Naive thymus-derived CD4-positive, alpha-beta T cell (primary cell): ENCODE measurements at regions of chr6 and their contacts with region 1.

Region 1: GRCh38 chr6:32971581-32972352 is 3.4 kb downstream of the BRD2 start:
- DNase-seq: peak; percentile 99 to 100 (median 100)
- ATAC-seq: peak; percentile 73
- H3K4me3 ChIP-seq: peak overlapping the region; percentile 98
- H3K4me3 Mint-ChIP-seq: peak overlapping the region; percentile 89 to 100 (median 98)
- H3K27ac ChIP-seq: peak overlapping the region; percentile 94
- H3K27ac Mint-ChIP-seq: peak overlapping the region; percentile 78 to 100 (median 99)
- H3K4me1 ChIP-seq: peaks cover 26 to 32% of the 10 kb centered on the region in 2 donors
- H3K4me1 Mint-ChIP-seq: peaks cover 31 to 47% (median 40%) of the 10 kb centered on the region in 7 donors
- H3K27me3 ChIP-seq: no peaks in the 10 kb centered on the region
- H3K27me3 Mint-ChIP-seq: peaks cover 0 to 5% (median 0%) of the 10 kb centered on the region in 5 donors

Region 2: GRCh38 chr6:31739639-31740396 is 1231.9 kb before region 1 on chr6 and contains the start of gene MSH5:
- CTCF ChIA-PET with region 1: no interaction called
- POLR2A ChIA-PET with region 1: no interaction called
- intact Hi-C with region 1: loop called (anchors 5 kb)
- DNase-seq: peak; percentile 82 to 97 (median 92)
- ATAC-seq: peak; percentile 93
- H3K4me3 ChIP-seq: peak within 1 kb of the TSS; percentile 68
- H3K4me3 Mint-ChIP-seq: peak within 1 kb of the TSS; percentile 86 to 100 (median 98)
- H3K27ac ChIP-seq: peak within 1 kb of the TSS; percentile 69
- H3K27ac Mint-ChIP-seq: peak within 1 kb of the TSS; percentile 83 to 94 (median 90)
- H3K4me1 ChIP-seq: peaks cover 32 to 33% of the 10 kb centered on the region in 2 donors
- H3K4me1 Mint-ChIP-seq: peaks cover 41 to 69% (median 61%) of the 10 kb centered on the region in 7 donors
- H3K27me3 ChIP-seq: no peaks in the 10 kb centered on the region
- H3K27me3 Mint-ChIP-seq: no peaks in the 10 kb centered on the region
- total RNA-seq, gene MSH5: 10.3 to 52.2 (median 11.4) TPM

Region 3: DNA sequence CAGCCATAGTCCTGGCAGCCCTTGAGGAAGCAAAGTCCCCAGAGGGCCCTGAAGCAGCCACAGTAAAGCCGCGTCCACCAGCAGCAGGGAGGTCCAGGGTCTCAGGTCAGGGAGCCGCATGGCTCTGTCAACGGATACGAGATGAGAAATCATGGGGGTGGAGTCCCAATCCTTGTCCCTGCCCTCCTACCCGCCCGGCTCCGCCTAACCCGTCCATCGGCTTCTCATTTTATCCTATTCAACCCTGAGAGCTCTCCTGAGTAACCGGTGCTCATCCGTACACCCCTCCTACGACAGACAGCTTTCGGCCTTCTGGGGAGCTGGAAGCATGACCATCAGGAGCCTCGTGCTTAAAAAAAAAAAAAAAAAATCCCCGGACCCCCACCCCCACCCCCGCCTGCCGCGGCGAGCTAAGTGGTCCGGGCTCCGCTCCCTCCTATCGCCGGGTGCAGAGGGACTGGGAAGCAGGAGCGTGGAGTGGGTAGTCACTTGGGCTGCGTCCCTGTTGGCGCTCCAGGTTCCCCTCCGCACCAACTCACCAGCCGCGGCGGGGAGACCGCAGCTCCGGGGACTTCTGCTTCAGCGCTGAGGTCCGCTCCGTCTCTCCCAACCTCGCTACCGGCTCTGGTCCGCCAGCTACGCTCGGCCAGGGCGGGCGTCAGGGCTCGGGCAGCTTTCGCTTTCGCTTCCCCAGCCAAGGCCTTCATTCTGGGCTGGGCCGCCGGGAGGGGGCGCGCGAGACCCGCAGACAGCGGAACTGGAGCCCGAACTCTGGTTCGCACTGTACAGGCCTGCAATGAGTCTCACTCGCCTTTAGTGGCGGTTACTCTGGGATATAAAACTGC is 133.4 kb before region 1 on chr6 and contains the start of gene TAP2:
- CTCF ChIA-PET with region 1: interaction called, 7 read pairs
- POLR2A ChIA-PET with region 1: interaction called, 347 read pairs
- intact Hi-C with region 1: loop called (anchors 1 kb)
- DNase-seq: peak; percentile 93 to 100 (median 97)
- ATAC-seq: peak; percentile 97
- H3K4me3 ChIP-seq: peak within 1 kb of the TSS; percentile 87
- H3K4me3 Mint-ChIP-seq: peak within 1 kb of the TSS; percentile 85 to 98 (median 93)
- H3K27ac ChIP-seq: peak within 1 kb of the TSS; percentile 97
- H3K27ac Mint-ChIP-seq: peak within 1 kb of the TSS; percentile 89 to 100 (median 99)
- H3K4me1 ChIP-seq: peaks cover 52 to 64% of the 10 kb centered on the region in 2 donors
- H3K4me1 Mint-ChIP-seq: peaks cover 71 to 92% (median 84%) of the 10 kb centered on the region in 7 donors
- H3K27me3 ChIP-seq: no peaks in the 10 kb centered on the region
- H3K27me3 Mint-ChIP-seq: no peaks in the 10 kb centered on the region
- total RNA-seq, gene TAP2: 84.3 to 243 (median 117) TPM

Region 4: DNA sequence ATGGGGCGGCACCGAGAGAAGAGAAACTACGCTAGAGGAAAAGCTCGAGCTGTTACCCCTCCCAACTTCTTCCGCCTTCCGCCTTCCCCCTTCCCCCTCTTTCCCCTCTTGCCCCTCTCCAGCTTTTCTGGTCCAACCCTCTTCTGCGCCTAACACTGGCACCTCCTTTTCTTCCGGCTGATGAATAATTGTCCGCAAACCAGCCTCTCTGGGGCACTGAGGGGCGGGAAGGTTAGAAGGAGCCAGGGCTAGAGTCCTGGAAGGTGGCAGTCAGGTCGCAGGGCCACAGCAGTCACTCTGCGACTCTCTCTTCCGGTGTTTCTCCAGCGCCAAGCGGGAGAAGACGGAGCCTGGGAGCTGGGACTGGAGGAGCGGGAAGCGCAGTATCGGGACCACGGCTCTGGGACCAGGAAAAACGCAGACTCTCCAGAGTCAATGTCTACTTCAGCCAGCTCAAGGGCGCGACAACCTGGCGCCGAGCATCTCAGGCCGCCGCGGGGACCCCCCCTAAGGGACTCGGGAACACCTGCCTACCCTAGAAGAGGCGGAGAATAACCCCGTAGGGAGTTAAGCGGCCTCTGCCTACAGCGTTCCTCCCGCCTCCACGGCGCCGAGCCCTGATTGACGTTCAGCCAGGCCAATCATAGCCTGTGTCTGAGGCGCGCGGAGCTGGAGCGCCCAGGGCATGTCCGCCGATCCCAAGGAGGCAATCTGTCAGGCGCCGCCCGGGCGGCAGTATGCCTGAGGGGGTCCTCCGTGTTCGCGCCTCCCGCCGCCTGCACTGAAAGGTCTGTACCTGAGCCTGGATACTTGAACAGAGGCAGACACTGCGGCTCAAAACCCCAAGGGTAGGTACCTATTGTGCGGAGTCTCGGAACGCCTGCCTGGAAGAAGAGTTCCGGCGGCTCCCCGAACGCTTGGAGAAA is 77.4 kb before region 1 on chr6:
- CTCF ChIA-PET with region 1: interaction called, 5 read pairs
- POLR2A ChIA-PET with region 1: interaction called, 101 read pairs
- intact Hi-C with region 1: loop called (anchors 1 to 2 kb)
- DNase-seq: peak; percentile 89 to 98 (median 94)
- ATAC-seq: peak; percentile 99
- H3K4me3 ChIP-seq: peak overlapping the region; percentile 81
- H3K4me3 Mint-ChIP-seq: peak overlapping the region; percentile 91 to 100 (median 99)
- H3K27ac ChIP-seq: peak overlapping the region; percentile 78
- H3K27ac Mint-ChIP-seq: peak overlapping the region; percentile 78 to 97 (median 94)
- H3K4me1 ChIP-seq: peaks cover 12 to 13% of the 10 kb centered on the region in 2 donors
- H3K4me1 Mint-ChIP-seq: peaks cover 30 to 43% (median 36%) of the 10 kb centered on the region in 7 donors
- H3K27me3 ChIP-seq: no peaks in the 10 kb centered on the region
- H3K27me3 Mint-ChIP-seq: peaks cover 0 to 4% (median 0%) of the 10 kb centered on the region in 5 donors

Region 5: DNA sequence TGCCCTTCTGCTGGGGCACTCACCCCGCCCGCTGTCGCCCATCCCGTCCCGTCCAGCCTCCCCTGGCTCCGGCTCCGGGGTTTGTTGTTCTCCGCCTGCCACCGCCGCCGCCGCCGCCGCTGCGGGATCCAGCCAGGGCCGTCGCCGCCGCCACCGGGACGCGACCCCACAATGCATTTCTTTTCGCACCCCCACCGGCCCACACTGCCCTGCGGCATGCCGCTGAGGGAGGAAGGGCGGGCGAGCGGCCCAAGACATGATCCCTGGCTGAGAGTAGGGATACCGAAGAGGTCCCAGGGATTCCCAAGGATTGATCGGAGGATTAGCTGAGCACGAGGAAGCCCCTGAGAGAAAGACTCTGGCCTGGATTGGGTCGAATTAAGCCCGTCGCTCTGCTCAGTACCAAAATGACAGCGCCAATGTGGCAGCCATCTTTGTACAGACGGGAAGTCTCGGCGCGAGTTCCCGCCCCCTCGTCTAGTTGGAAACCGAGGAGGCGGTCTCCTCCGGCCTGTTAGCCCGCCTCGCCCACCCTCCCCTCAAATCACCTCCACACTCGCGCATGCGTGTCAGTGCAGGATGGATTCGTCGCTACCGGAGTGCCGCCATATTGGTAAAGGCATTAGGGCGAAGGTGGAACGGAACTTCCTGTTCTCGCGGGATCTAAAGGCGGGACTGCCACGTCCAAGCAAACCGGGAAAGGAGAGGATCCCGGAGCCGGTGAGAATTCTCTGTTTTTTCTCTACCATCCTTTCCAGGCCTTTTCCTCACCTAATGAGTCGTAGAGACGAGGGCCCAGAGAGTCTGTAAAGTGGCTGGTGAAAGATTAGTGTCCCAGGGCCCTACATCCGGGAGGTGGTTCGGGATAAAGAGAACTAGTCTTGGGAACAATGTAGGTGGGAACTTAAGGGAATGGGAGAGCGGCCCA is 228.7 kb after region 1 on chr6 and contains the starts of genes RXRB and SLC39A7:
- CTCF ChIA-PET with region 1: no interaction called
- POLR2A ChIA-PET with region 1: interaction called, 6 read pairs
- intact Hi-C with region 1: loop called (anchors 1 kb)
- DNase-seq: peak; percentile 88 to 99 (median 97)
- ATAC-seq: peak; percentile 85
- H3K4me3 ChIP-seq: peak within 1 kb of the TSS; percentile 89
- H3K4me3 Mint-ChIP-seq: peak within 1 kb of the TSS; percentile 95 to 100 (median 99)
- H3K27ac ChIP-seq: peak within 1 kb of the TSS; percentile 96
- H3K27ac Mint-ChIP-seq: peak within 1 kb of the TSS; percentile 97 to 99 (median 99)
- H3K4me1 ChIP-seq: peaks cover 32 to 37% of the 10 kb centered on the region in 2 donors
- H3K4me1 Mint-ChIP-seq: peaks cover 62 to 84% (median 73%) of the 10 kb centered on the region in 7 donors
- H3K27me3 ChIP-seq: no peaks in the 10 kb centered on the region
- H3K27me3 Mint-ChIP-seq: no peaks in the 10 kb centered on the region
- total RNA-seq, gene RXRB: 50.3 to 103 (median 76.2) TPM
- total RNA-seq, gene SLC39A7: 19.1 to 51.9 (median 27.9) TPM

Region 6: GRCh38 chr6:33317669-33318425 is 346.1 kb after region 1 on chr6 and contains the start of gene ZBTB22:
- CTCF ChIA-PET with region 1: no interaction called
- POLR2A ChIA-PET with region 1: interaction called, 7 read pairs
- intact Hi-C with region 1: loop called in 1 of 2 experiments (anchors 1 kb)
- DNase-seq: peak; percentile 87 to 97 (median 96)
- ATAC-seq: peak; percentile 73
- H3K4me3 ChIP-seq: peak within 1 kb of the TSS; percentile 97
- H3K4me3 Mint-ChIP-seq: peak within 1 kb of the TSS; percentile 81 to 100 (median 100)
- H3K27ac ChIP-seq: peak within 1 kb of the TSS; percentile 99
- H3K27ac Mint-ChIP-seq: peak within 1 kb of the TSS; percentile 97 to 99 (median 98)
- H3K4me1 ChIP-seq: peaks cover 59 to 62% of the 10 kb centered on the region in 2 donors
- H3K4me1 Mint-ChIP-seq: peaks cover 53 to 85% (median 75%) of the 10 kb centered on the region in 7 donors
- H3K27me3 ChIP-seq: no peaks in the 10 kb centered on the region
- H3K27me3 Mint-ChIP-seq: peaks cover 0 to 2% (median 0%) of the 10 kb centered on the region in 5 donors
- total RNA-seq, gene ZBTB22: 15.5 to 30.1 (median 20.5) TPM